ENCODE measurements at regions of chr2 and their contacts with region 1.

Region 1: DNA sequence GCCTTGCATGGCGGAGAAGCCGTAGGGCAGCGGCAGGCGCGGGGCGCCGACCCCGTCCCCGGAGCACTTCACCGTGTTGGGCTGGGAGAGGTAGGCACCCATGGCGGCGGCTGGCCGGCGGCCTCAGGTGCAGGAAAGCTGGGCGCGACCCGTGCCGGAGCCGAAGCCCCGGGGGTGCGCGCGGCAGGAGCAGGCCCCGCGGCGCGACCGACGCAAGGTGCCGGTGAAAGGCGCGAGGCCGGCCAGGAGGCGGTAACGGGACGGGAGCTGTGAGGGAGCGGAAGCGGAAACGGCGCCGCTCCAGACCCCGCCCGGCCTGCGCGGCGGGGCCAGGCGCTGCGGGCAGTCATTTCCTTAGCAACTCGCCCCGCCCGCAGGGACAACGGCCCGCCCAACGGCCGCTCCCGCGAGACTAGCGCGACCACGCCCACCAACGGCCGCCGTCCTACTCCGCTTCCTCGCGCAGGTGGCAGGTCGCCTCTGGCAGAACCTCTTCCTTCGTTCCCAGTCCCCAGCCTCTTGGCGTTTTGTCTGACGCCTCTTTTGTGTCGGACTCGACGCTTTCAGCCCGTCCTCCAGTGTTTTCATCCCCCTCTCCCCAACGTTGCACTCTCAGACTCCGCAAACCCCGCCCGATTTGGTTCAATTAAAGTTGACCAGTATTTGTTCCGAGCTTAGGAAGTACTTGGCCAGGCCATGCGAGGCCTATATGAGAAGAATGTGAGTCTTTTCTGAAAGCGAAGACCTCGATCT is at the start of gene PPM1G:
- DNase-seq: peak; percentile 97

Region 2: DNA sequence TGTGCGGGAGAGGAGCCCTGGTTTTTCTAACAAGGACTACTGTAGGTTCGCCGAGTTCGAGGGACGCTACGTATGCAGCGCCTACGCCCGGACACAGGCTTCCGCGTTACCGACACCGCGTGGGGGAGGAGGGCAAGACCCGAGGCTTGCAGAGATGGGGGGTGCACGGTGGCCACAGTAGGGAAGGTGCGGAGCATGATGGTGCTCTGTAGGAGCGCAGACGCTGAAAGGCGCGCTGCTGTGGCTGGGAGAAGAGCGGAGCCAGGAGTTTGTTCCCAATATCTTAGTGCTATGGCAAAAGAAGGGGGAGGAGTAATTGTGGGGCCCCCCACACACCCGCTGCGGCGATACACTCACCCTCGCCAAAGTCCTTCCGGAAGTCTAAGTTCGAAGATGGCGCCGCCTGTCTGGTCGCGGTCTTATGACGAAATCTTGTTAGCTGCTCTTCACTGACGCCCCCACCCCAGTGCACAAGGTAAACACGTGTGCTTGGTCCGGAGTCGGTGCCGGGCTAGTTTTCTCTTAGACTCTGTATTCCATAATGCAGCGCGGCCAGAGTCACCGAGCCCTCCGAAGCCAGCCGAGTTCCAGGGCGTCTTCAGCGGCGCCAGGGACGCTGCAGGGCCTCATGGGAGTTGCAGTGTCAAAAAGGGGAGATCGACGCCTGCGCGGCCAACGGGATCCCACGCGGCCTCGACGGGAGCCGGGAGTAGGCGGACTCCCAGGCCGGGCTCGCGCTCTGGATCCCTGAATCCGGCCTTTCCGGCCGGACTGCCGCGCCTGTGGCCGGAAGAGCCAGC is 52.9 kb before region 1 on chr2 and contains the start of gene GTF3C2:
- CTCF ChIA-PET with region 1: no interaction called
- POLR2A ChIA-PET with region 1: interaction called, 13 read pairs
- DNase-seq: peak; percentile 90

Region 3: DNA sequence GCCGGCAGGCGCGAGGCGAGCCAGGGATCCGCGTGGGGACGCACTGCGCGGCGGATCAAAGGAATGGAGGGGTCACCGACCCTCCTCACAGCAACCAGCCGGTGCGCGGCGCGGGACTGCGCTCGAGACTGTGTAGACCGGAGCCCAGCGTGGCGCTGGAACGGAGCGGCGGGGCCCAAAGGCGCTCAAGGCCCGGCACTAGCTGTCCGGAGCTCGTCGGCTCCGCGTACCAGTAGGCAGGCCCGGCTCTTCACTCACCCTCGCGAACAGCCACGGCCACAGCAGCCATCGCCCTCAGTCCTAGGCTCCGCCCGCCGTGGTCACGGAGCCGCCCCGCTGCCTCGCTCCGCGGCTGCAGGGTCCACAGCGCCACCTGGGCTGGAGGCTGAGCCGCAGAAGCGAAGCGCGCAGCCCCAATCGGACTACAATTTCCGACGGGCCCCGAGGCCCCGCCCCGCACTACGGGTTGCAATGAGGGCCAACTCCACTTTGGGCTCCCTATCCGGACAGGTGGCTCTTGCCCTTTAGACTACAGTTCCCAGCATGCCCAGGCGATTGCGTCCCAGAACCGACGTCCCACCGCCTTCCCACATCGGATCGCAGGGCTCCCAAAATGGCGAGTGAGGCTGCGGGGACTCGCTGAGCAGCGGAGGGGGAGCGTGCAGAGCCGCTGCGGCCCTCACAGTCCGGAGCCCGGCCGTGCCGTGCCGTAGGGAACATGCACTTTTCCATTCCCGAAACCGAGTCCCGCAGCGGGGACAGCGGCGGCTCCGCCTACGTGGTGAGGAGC is 39.3 kb before region 1 on chr2 and contains the starts of genes EIF2B4 and SNX17:
- CTCF ChIA-PET with region 1: no interaction called
- POLR2A ChIA-PET with region 1: interaction called, 11 read pairs
- DNase-seq: peak; percentile 93

Region 4: DNA sequence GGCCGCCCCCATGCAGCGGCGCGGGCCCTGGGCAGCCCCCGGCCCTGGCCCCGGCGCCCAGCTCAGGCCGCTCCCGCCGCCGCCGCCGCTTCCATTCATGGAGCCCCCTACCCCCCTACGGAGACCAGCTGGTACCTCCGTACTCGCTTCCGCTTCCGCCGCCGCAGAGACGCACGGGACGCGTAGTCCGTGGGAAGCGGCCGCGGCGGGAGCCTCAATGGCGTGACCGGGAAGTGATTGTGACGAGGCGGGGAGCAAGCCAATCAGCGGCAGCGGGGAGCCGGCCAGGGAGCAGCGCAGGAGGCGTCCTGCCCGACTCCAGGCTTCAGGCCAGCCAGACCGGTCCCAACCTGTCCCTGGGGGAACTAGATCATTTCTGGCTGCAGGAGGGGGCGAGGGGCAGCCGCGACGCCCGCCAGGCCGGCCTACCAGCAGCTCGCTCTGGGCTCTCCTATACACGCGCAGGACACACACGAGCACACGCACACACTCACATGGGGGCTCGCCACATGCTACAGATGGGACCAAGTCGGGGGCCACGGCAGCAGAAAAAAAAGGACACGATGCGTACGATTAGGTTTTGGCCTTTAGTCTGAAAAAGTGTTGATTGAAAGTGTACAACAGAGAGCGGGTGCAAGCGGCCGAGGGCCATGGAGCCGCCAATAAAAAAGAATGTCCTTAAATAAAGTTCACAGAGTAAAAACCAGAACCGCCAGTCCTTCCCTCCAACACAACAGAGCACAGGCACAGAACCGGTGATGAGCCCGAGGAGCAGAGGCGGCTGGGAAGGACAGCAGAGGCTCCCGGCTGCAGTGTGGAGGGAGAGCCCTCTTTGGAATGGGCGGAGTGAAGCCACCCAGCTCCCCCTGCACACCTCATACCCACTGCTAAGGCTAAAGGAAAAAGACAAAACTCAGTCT is 28.6 kb before region 1 on chr2 and contains the start of gene ZNF513:
- CTCF ChIA-PET with region 1: interaction called, 5 read pairs
- POLR2A ChIA-PET with region 1: interaction called, 13 read pairs
- DNase-seq: peak; percentile 91

Region 5: DNA sequence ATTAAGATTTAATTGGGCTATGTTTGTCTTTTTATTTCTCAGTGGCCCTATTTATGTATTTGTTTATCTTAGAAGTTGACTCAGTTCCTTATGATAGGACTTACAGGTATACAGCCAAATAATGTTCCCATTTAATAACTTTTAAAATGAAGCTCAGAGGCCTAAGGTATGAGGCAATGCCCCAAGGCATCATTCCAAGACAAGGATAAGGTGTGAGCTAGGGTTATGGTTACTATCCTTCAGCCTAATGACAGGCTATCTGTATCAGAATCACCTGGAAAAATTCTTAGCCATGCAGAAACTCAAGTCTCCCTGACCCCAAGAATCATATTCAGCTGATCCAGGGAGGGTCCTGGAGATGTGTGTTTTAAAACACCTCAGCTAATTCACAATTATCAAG is 11.5 kb after region 1 on chr2:
- CTCF ChIA-PET with region 1: no interaction called
- POLR2A ChIA-PET with region 1: interaction called, 135 read pairs
- DNase-seq: no peak

Region 6: GRCh38 chr2:27428213-27428977 is 18.9 kb after region 1 on chr2 and contains the start of gene NRBP1:
- CTCF ChIA-PET with region 1: interaction called, 12 read pairs
- POLR2A ChIA-PET with region 1: interaction called, 135 read pairs
- DNase-seq: peak; percentile 93

Measured in HEK293T (cell line).